ENCODE measurements at regions of chr3 and their contacts with region 1.

Region 1: GRCh38 chr3:47781685-47782445 is at the start of gene SMARCC1:
- DNase-seq: peak; percentile 98

Region 2: GRCh38 chr3:47522082-47522987 is 259.5 kb before region 1 on chr3:
- CTCF ChIA-PET with region 1: interaction called, 16 read pairs
- POLR2A ChIA-PET with region 1: interaction called, 12 read pairs
- DNase-seq: peak; percentile 89